B cell (primary cell): ENCODE measurements at regions of chr14 and their contacts with region 1.

Region 1: GRCh38 chr14:65462411-65462810 is 49.9 kb downstream of the FUT8 start:
- DNase-seq: no peak
- ATAC-seq: no peak
- H3K4me3 ChIP-seq: no peak overlapping the region
- H3K4me3 Mint-ChIP-seq: peak overlapping the region; percentile 49
- H3K27ac ChIP-seq: peak overlapping the region in 1 of 2 donors; percentile 70
- H3K27ac Mint-ChIP-seq: peak overlapping the region; percentile 54
- H3K4me1 ChIP-seq: peaks cover 16 to 22% of the 10 kb centered on the region in 2 donors
- H3K4me1 Mint-ChIP-seq: peaks cover 53% of the 10 kb centered on the region
- H3K27me3 ChIP-seq: no peaks in the 10 kb centered on the region
- H3K27me3 Mint-ChIP-seq: no peaks in the 10 kb centered on the region
- CTCF ChIP-seq: no peak

Region 2: GRCh38 chr14:65478596-65478995 is 16.2 kb after region 1 on chr14:
- CTCF ChIA-PET with region 1: no interaction called
- POLR2A ChIA-PET with region 1: interaction called, 10 read pairs
- intact Hi-C with region 1: no loop called
- DNase-seq: peak; percentile 16
- ATAC-seq: no peak
- H3K4me3 ChIP-seq: no peak overlapping the region
- H3K4me3 Mint-ChIP-seq: no peak overlapping the region
- H3K27ac ChIP-seq: no peak overlapping the region
- H3K27ac Mint-ChIP-seq: no peak overlapping the region
- H3K4me1 ChIP-seq: peaks cover 13 to 23% of the 10 kb centered on the region in 2 donors
- H3K4me1 Mint-ChIP-seq: peaks cover 64% of the 10 kb centered on the region
- H3K27me3 ChIP-seq: no peaks in the 10 kb centered on the region
- H3K27me3 Mint-ChIP-seq: no peaks in the 10 kb centered on the region
- CTCF ChIP-seq: no peak